Activated CD4-positive, alpha-beta memory T cell treated with anti-CD3 and anti-CD28 coated beads for 36 hours (primary cell): ENCODE measurements at regions of chr10 and their contacts with region 1.

Region 1: DNA sequence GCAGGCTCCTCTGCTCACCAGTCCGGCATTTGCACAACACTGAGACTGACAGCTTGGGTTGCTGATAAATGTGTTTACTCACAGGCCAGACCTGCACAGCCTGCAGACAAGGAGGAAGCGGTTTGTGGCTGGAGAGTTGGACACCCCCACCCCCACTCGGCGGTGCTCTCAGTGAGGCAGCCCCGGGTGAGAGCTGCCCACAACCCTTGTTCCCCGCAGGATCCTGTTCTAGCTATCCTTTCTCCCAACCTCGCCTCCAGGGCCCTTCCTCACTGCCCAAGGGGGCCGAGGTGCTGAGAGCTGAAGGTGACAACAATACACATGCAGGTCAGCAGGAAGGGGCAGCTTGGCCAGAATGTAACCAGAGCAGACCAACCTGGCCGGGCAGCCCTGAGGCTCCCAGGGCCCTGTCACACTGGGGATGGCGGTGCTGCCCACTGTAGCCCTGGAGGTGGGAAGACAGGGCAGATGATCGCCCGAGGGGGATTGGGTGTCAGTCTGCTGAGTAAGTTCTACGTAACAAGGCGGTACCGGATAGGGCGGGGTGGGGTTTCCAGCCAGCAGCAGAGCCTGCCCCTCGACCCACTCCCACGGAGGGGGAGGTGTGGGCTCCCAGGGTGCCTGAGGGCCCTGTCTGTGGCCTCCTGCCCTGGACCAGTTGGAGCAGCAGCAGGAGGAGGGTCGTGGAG is 2.1 kb upstream of the ADAM8 start:
- DNase-seq: peak; percentile 83
- H3K4me3 Mint-ChIP-seq: peak overlapping the region; percentile 63
- H3K27ac Mint-ChIP-seq: peak overlapping the region; percentile 85
- H3K4me1 Mint-ChIP-seq: peaks cover 28% of the 10 kb centered on the region
- H3K27me3 Mint-ChIP-seq: no peaks in the 10 kb centered on the region

Region 2: GRCh38 chr10:133139551-133140065 is 139.1 kb before region 1 on chr10:
- CTCF ChIA-PET with region 1: interaction called, 14 read pairs
- POLR2A ChIA-PET with region 1: interaction called, 3 read pairs
- intact Hi-C with region 1: loop called (anchors 1 kb)
- DNase-seq: peak; percentile 8
- H3K4me3 Mint-ChIP-seq: no peak overlapping the region
- H3K27ac Mint-ChIP-seq: no peak overlapping the region
- H3K4me1 Mint-ChIP-seq: peaks cover 3% of the 10 kb centered on the region
- H3K27me3 Mint-ChIP-seq: peaks cover 8% of the 10 kb centered on the region

Region 3: DNA sequence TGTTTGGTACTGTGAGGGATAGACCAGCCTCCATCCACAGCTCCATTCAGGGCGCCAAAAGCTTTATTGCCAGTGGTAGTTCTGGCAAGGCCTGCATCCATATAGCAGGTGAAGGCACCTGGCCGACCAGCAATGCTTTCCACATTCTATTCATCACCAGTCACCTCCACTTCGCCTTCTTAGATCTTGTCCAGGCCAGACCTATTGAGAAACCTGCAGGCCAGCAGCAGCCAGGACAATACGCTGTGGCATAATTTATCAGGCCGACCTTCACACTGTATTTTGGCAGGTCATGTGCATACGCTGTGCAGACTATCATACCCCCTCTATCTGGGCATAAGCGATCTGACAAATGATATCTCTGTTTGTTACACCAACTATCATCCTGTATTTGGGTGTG is 133.9 kb before region 1 on chr10:
- CTCF ChIA-PET with region 1: interaction called, 14 read pairs
- POLR2A ChIA-PET with region 1: interaction called, 3 read pairs
- intact Hi-C with region 1: loop called (anchors 1 kb)
- DNase-seq: no peak
- H3K4me3 Mint-ChIP-seq: no peak overlapping the region
- H3K27ac Mint-ChIP-seq: no peak overlapping the region
- H3K4me1 Mint-ChIP-seq: peaks cover 3% of the 10 kb centered on the region
- H3K27me3 Mint-ChIP-seq: peaks cover 41% of the 10 kb centered on the region

Region 4: DNA sequence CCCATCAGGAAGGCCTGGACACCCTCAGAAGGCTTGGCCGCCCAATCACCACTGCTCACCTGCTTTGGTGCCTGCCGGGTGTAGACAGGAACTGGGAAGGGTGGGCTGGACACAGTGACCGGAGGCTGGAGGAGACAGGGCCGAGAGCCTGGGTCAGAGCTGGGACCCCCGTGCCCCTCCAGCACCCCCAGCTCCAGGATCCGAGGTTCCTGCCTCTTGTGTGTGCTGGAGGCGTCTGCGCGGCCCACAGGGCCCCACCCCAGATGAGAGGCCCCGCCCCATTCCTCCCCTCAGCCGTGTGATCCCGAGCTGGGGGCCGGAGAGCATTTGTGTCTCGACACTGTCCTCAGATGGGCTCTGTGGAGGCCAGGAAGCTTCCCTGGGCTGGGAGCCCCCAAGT is 11.4 kb before region 1 on chr10:
- CTCF ChIA-PET with region 1: interaction called, 15 read pairs
- POLR2A ChIA-PET with region 1: interaction called, 30 read pairs
- intact Hi-C with region 1: no loop called
- DNase-seq: no peak
- H3K4me3 Mint-ChIP-seq: no peak overlapping the region
- H3K27ac Mint-ChIP-seq: no peak overlapping the region
- H3K4me1 Mint-ChIP-seq: peaks cover 34% of the 10 kb centered on the region
- H3K27me3 Mint-ChIP-seq: no peaks in the 10 kb centered on the region